WTC11 (cell line): ENCODE measurements at regions of chr1 and their contacts with region 1.

Region 1: GRCh38 chr1:156500797-156501499 is 373 bp upstream of the MEF2D start:
- DNase-seq: peak; percentile 89
- ATAC-seq: peak; percentile 65
- H3K4me3 Mint-ChIP-seq: peak overlapping the region; percentile 83
- H3K27ac Mint-ChIP-seq: peak overlapping the region; percentile 36; the same call in 1 of the 2 replicates
- H3K4me1 Mint-ChIP-seq: peaks cover 70% of the 10 kb centered on the region
- H3K27me3 Mint-ChIP-seq: peaks cover 13% of the 10 kb centered on the region
- CTCF ChIP-seq: no peak

Region 2: GRCh38 chr1:156456622-156457465 is 44.1 kb before region 1 on chr1:
- CTCF ChIA-PET with region 1: interaction called, 32 read pairs
- POLR2A ChIA-PET with region 1: interaction called, 15 read pairs
- DNase-seq: peak; percentile 97
- ATAC-seq: peak; percentile 84
- H3K4me3 Mint-ChIP-seq: peak overlapping the region; percentile 89
- H3K27ac Mint-ChIP-seq: peak overlapping the region; percentile 99
- H3K4me1 Mint-ChIP-seq: peaks cover 15% of the 10 kb centered on the region
- H3K27me3 Mint-ChIP-seq: no peaks in the 10 kb centered on the region
- CTCF ChIP-seq: no peak

Region 3: GRCh38 chr1:156465747-156466365 is 35.1 kb before region 1 on chr1:
- CTCF ChIA-PET with region 1: interaction called, 20 read pairs
- POLR2A ChIA-PET with region 1: interaction called, 6 read pairs
- DNase-seq: peak; percentile 66
- ATAC-seq: peak; percentile 75
- H3K4me3 Mint-ChIP-seq: no peak overlapping the region
- H3K27ac Mint-ChIP-seq: peak overlapping the region; percentile 56
- H3K4me1 Mint-ChIP-seq: peaks cover 42% of the 10 kb centered on the region
- H3K27me3 Mint-ChIP-seq: no peaks in the 10 kb centered on the region
- CTCF ChIP-seq: no peak

Region 4: DNA sequence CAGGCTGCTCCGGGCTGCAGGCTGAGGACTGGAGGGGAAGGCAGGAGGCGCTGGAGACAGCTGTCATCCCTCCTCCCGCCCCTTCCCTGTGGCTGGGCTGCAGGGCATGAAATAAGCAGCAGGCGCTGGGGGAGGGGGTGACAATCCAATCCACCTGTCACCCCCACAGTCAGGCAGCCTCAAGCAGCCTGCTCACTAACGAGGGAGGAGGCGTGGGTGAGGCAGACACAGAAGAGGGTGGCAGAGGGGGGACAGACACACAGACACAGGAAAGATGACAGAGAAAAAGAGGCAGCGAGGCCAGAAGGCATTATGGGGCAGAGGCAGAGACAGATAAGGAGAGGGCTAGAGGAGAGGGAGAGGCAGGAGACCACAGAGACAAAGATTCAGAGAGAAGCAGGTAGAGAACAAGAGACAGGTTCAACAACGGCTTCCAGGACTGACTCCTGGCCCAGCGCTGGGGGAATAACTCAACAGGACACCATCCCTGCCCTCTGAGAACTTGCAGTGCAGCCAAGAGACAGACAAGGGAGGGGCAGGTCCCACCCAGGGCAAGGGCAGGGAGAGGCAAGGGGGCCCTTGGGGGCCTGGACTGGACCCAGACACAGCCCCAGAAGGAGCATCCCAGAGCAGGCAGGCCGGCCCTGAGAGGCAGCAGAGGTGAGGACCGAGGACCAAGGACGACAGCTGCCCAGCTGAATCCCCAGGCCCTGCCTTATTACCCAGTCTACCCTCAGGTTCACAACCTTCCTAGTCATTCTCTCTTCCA is 11.6 kb before region 1 on chr1:
- CTCF ChIA-PET with region 1: interaction called, 142 read pairs
- POLR2A ChIA-PET with region 1: interaction called, 29 read pairs
- DNase-seq: peak; percentile 60
- ATAC-seq: peak; percentile 50
- H3K4me3 Mint-ChIP-seq: peak overlapping the region; percentile 54
- H3K27ac Mint-ChIP-seq: peak overlapping the region; percentile 70
- H3K4me1 Mint-ChIP-seq: peaks cover 60% of the 10 kb centered on the region
- H3K27me3 Mint-ChIP-seq: no peaks in the 10 kb centered on the region
- CTCF ChIP-seq: no peak

Region 5: DNA sequence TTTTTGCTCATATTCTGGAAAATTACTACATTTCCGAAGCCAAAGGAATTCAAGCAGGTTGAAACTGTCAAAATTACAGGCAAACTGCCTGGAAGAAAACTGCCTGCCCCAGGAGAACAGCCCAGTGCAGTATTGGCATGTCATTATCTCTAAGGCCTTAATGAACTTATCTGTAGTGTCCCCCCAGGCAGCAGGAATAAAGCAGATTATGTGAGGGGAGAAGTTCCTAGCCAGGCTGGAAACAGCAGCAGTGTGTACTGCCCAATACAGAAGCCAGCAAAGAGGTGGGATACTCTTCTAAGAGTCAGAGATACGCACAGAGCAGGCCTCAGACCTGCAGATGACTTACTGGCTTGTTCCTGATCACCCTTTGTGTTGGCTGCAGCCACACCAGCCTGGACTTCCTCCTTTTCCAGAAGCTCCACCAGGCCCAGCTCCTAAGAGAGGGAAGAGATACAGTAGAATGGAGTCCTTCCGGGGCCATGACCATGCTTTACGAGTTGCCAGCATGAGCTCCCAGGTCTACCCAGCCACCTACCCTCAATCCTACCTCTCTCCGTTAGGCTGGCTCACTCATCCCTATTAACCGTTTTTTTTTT is 59.7 kb after region 1 on chr1:
- CTCF ChIA-PET with region 1: no interaction called
- POLR2A ChIA-PET with region 1: interaction called, 12 read pairs
- DNase-seq: no peak
- ATAC-seq: no peak
- H3K4me3 Mint-ChIP-seq: no peak overlapping the region
- H3K27ac Mint-ChIP-seq: no peak overlapping the region
- H3K4me1 Mint-ChIP-seq: no peaks in the 10 kb centered on the region
- H3K27me3 Mint-ChIP-seq: no peaks in the 10 kb centered on the region
- CTCF ChIP-seq: no peak

Region 6: DNA sequence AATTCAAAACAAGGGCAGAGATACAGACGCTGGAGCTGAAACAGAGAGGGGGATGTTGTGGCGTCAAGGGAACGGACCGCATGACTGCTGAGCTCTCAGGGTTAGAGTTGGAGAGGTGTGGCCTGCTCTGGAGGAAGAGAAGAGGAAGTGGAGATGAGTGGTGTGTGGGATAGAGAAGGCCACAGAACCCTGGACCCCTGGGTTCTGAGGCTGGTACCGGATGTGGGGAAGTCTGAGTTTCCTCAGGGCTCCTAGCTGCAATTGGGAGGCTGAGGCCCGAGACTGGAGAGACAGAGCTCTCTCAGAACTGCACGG is 142.8 kb after region 1 on chr1:
- CTCF ChIA-PET with region 1: no interaction called
- POLR2A ChIA-PET with region 1: no interaction called
- DNase-seq: no peak
- ATAC-seq: no peak
- H3K4me3 Mint-ChIP-seq: no peak overlapping the region
- H3K27ac Mint-ChIP-seq: no peak overlapping the region
- H3K4me1 Mint-ChIP-seq: peaks cover 29% of the 10 kb centered on the region
- H3K27me3 Mint-ChIP-seq: peaks cover 100% of the 10 kb centered on the region
- CTCF ChIP-seq: no peak